Vagina (tissue), 2 donors: ENCODE measurements at regions of chr4 and their contacts with region 1.

Region 1: GRCh38 chr4:61693520-61693919 is 493.4 kb downstream of the ADGRL3 start:
- DNase-seq: no peak
- H3K4me3 ChIP-seq: no peak overlapping the region
- H3K27ac ChIP-seq: no peak overlapping the region
- H3K4me1 ChIP-seq: no peaks in the 10 kb centered on the region
- H3K27me3 ChIP-seq: no peaks in the 10 kb centered on the region
- CTCF ChIP-seq: no peak
- POLR2A ChIP-seq: no peak

Region 2: GRCh38 chr4:60500810-60501209 is 1192.7 kb before region 1 on chr4:
- intact Hi-C with region 1: loop called (anchors 5 kb)
- DNase-seq: no peak
- H3K4me3 ChIP-seq: no peak overlapping the region
- H3K27ac ChIP-seq: no peak overlapping the region
- H3K4me1 ChIP-seq: no peaks in the 10 kb centered on the region
- H3K27me3 ChIP-seq: no peaks in the 10 kb centered on the region
- CTCF ChIP-seq: no peak
- POLR2A ChIP-seq: no peak

Region 3: GRCh38 chr4:61407642-61408618 is 285.6 kb before region 1 on chr4:
- intact Hi-C with region 1: no loop called
- DNase-seq: no peak
- H3K4me3 ChIP-seq: no peak overlapping the region
- H3K27ac ChIP-seq: no peak overlapping the region
- H3K4me1 ChIP-seq: no peaks in the 10 kb centered on the region
- H3K27me3 ChIP-seq: no peaks in the 10 kb centered on the region
- CTCF ChIP-seq: no peak
- POLR2A ChIP-seq: no peak

Region 4: DNA sequence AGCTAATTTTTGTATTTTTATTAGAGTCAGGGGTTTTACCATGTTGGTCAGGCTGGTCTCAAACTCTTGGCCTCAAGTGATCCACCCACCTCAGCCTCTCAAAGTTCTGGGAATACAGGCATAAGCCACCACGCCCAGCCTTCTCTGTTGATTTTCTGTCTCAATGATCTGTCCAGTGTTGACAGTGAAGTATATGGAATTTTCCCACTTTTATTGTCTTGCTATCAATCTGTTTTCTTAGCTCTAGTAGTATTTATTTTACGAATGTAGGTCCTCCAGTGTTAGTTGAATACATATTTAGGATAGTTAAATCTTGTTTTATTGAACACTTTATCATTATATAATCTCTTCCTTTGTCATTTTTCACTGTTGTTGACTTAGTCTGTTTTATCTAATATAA is 1110.6 kb after region 1 on chr4:
- intact Hi-C with region 1: loop called (anchors 5 kb)
- DNase-seq: no peak
- H3K4me3 ChIP-seq: no peak overlapping the region
- H3K27ac ChIP-seq: no peak overlapping the region
- H3K4me1 ChIP-seq: no peaks in the 10 kb centered on the region
- H3K27me3 ChIP-seq: no peaks in the 10 kb centered on the region
- CTCF ChIP-seq: no peak
- POLR2A ChIP-seq: no peak